Activated CD4-positive, alpha-beta T cell treated with anti-CD3 and anti-CD28 coated beads, Interleukin-2, amount 10 ng/mL, durations not matched to agents 24 days and 14 days (primary cell): ENCODE measurements at regions of chr1 and their contacts with region 1.

Region 1: DNA sequence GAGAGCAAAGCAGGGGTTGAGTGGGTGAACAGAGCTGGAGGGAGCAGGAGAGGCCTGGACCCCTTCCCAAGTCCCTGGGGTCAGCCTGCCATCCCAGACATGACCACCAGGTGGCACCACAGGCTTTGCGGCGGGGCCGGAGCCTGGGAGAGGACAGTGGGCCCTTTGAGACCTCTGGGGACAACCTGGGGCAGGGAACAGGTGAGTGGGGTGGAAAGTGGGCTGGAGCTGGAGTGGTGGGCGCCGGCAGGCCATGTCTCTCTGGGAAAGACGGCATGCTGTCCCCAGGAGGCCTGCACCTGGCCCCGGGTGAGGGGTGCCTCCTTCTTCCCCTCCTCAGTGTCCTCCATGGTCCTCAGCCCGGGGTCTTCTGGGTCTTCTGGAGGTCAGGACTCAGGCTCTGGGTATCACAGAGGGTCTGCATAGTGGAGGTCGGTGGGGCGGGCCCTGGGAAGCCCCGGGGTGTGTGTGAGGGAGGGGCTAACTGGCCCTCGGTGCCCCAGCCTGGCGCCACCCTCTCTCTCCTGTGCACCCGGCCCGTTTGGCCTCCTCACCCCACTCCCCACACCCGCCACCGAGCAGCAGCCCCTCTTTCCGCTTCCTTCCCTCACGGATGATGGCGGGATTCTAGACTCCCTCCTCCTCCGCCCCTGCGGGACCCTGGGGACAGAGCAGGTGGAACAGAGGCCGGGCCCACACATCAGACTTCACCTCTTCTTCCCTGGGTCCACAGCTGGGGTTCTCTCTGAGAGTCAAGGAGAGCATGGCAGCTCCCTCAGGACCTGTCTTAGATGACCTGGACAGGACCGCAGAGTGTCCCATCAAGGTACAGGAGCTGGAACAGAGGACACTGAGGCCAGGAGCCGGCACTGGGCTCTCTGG is 28.4 kb upstream of the PKP1 start:
- DNase-seq: peak; percentile 90
- H3K4me3 Mint-ChIP-seq: no peak overlapping the region
- H3K27ac Mint-ChIP-seq: no peak overlapping the region
- H3K4me1 Mint-ChIP-seq: no peaks in the 10 kb centered on the region
- H3K27me3 Mint-ChIP-seq: no peaks in the 10 kb centered on the region

Region 2: GRCh38 chr1:201206176-201206575 is 48.7 kb before region 1 on chr1:
- intact Hi-C with region 1: no loop called
- DNase-seq: no peak
- H3K4me3 Mint-ChIP-seq: no peak overlapping the region
- H3K27ac Mint-ChIP-seq: no peak overlapping the region
- H3K4me1 Mint-ChIP-seq: no peaks in the 10 kb centered on the region
- H3K27me3 Mint-ChIP-seq: peaks cover 9% of the 10 kb centered on the region

Region 3: DNA sequence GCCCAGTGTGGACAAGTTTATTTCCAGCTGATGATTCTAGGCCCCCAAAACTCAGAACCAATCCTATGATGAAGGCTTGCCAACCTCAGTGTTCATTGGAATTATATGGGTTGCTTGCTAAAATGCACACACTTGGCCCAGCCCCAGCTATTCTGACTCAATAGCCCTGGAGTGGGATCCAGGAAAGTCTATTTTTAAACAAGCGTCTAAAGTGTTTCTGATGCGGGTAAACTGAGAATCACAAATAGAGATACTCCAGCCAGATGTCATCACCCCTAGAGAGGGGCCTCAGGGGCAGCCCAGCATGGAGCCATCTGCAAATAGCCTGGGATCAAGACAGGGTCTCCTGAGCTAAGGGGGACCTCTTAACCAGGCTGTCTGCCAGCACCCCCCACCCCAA is 74.4 kb after region 1 on chr1:
- intact Hi-C with region 1: no loop called
- DNase-seq: no peak
- H3K4me3 Mint-ChIP-seq: no peak overlapping the region
- H3K27ac Mint-ChIP-seq: no peak overlapping the region
- H3K4me1 Mint-ChIP-seq: no peaks in the 10 kb centered on the region
- H3K27me3 Mint-ChIP-seq: peaks cover 7% of the 10 kb centered on the region

Region 4: GRCh38 chr1:201361652-201362504 is 107.0 kb after region 1 on chr1:
- intact Hi-C with region 1: loop called (anchors 1 kb)
- DNase-seq: peak; percentile 65
- H3K4me3 Mint-ChIP-seq: no peak overlapping the region
- H3K27ac Mint-ChIP-seq: no peak overlapping the region
- H3K4me1 Mint-ChIP-seq: no peaks in the 10 kb centered on the region
- H3K27me3 Mint-ChIP-seq: no peaks in the 10 kb centered on the region